ENCODE measurements at regions of chr6 and their contacts with region 1.

Region 1: DNA sequence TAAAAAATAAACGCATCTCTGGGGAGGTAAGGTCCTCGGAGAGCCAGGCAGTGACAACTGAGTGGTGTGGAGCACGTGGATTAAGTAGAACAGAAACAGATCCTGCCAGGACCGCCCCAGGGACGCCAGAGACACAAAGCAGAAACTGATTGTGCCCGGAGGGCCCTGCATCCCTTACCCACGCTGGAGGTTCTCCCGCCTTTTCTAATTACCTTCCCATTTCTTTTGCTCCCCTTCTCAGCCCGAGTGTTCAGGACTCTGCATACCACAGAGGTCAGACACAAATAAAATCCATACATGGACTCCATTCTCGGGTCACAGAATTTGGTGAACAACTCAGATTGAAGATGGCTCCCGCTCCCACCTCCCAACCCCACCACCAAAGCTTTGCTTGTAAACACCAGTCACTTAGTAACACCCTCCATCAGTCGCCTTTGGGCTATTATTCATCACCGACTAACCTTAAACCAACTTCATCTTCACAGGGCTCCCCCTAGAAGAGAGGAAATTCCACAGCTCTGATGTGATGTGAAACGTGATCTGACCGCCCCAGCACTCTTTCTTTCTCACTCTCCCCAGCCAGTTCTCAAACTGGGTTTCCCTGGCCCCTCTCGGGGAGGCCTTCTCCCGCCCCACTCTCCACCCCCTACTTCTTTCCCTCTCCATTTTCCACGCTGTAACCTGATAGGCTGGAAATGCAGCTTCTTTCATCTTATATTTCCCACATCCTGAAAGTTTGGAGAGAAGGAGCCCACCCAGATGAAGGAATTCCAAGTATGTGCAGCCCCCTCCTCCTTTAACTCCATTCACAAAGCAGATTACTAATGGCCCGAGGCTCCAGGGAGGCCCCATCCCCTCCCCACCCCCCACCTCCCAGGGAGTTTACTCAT is 32.5 kb upstream of the PIM1 start:
- DNase-seq: no peak
- H3K4me3 Mint-ChIP-seq: no peak overlapping the region
- H3K27ac Mint-ChIP-seq: peak overlapping the region; percentile 89
- H3K4me1 Mint-ChIP-seq: peaks cover 36% of the 10 kb centered on the region
- H3K27me3 Mint-ChIP-seq: no peaks in the 10 kb centered on the region

Region 2: GRCh38 chr6:37110500-37111461 is 26.7 kb before region 1 on chr6:
- intact Hi-C with region 1: loop called (anchors 1 kb)
- DNase-seq: no peak
- H3K4me3 Mint-ChIP-seq: no peak overlapping the region
- H3K27ac Mint-ChIP-seq: peak overlapping the region; percentile 40
- H3K4me1 Mint-ChIP-seq: peaks cover 13% of the 10 kb centered on the region
- H3K27me3 Mint-ChIP-seq: no peaks in the 10 kb centered on the region

Region 3: DNA sequence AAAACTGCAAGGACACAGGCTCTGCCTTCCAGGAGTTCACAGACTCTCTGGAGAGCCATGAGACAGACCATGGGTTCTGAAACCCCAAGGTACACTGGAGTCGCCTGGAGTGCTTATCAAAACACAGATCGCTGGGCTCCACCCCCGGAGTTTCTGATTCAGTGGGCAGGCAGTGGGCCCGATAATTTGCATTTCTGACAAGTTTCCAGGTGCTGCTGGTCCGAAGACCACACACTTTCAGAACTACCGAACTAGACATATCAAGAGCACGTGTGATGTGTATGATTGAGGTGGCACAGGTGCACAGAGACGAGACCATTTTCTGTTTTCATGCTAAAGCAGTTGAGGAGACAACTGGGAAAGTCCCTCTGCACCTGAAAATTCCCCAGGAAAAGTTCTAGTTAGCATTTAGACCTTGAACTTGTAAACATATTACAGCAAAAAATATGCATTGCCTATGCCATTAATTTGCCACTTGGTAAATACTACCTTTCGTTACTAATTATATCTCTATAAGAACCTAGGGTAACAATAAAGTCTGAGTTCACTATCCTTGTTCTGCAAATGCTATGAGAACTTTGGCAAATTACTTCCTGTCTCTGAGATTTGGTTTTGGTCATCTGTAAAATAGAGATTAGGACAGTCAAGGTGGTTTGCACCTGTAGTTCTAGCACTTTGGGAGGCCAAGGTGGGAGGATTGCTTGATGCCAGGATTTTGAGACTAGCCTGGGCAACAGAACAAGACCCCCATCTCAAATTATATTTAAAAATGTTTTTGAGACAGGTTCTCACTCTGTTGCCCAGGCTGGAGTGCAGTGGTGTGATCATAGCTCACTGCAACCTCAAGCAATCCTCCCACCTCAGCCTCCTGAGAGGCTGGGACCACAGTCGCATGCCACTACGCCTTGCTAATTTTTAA is 18.2 kb after region 1 on chr6:
- intact Hi-C with region 1: loop called (anchors 1 kb)
- DNase-seq: peak; percentile 31
- H3K4me3 Mint-ChIP-seq: no peak overlapping the region
- H3K27ac Mint-ChIP-seq: peak overlapping the region; percentile 65
- H3K4me1 Mint-ChIP-seq: peaks cover 25% of the 10 kb centered on the region
- H3K27me3 Mint-ChIP-seq: no peaks in the 10 kb centered on the region